ENCODE measurements at regions of chr2 and their contacts with region 1.

Region 1: GRCh38 chr2:166417669-166418068 is 41.9 kb upstream of the SCN9A start:
- DNase-seq: no peak
- H3K4me3 Mint-ChIP-seq: no peak overlapping the region
- H3K27ac Mint-ChIP-seq: no peak overlapping the region
- H3K4me1 Mint-ChIP-seq: no peaks in the 10 kb centered on the region
- H3K27me3 Mint-ChIP-seq: no peaks in the 10 kb centered on the region
- CTCF ChIP-seq: no peak

Region 2: GRCh38 chr2:165794536-165794928 is 623.1 kb before region 1 on chr2:
- CTCF ChIA-PET with region 1: no interaction called
- intact Hi-C with region 1: no loop called
- DNase-seq: peak; percentile 44
- H3K4me3 Mint-ChIP-seq: peak overlapping the region; percentile 83
- H3K27ac Mint-ChIP-seq: peak overlapping the region; percentile 92
- H3K4me1 Mint-ChIP-seq: peaks cover 26% of the 10 kb centered on the region
- H3K27me3 Mint-ChIP-seq: no peaks in the 10 kb centered on the region
- CTCF ChIP-seq: no peak

Region 3: GRCh38 chr2:165953655-165954606 is 463.7 kb before region 1 on chr2 and contains the start of gene TTC21B:
- CTCF ChIA-PET with region 1: no interaction called
- intact Hi-C with region 1: loop called (anchors 2 kb)
- DNase-seq: peak; percentile 97
- H3K4me3 Mint-ChIP-seq: no peak within 1 kb of the TSS
- H3K27ac Mint-ChIP-seq: no peak within 1 kb of the TSS
- H3K4me1 Mint-ChIP-seq: no peaks in the 10 kb centered on the region
- H3K27me3 Mint-ChIP-seq: no peaks in the 10 kb centered on the region
- CTCF ChIP-seq: peak; percentile 80
- total RNA-seq, gene TTC21B: 12.0 and 14.7 TPM in 2 replicates

Region 4: GRCh38 chr2:166239548-166239947 is 178.1 kb before region 1 on chr2:
- CTCF ChIA-PET with region 1: no interaction called
- intact Hi-C with region 1: no loop called
- DNase-seq: peak; percentile 61
- H3K4me3 Mint-ChIP-seq: no peak overlapping the region
- H3K27ac Mint-ChIP-seq: peak overlapping the region; percentile 73
- H3K4me1 Mint-ChIP-seq: peaks cover 53% of the 10 kb centered on the region
- H3K27me3 Mint-ChIP-seq: no peaks in the 10 kb centered on the region
- CTCF ChIP-seq: no peak

Region 5: GRCh38 chr2:166516712-166517303 is 99.1 kb after region 1 on chr2:
- CTCF ChIA-PET with region 1: interaction called, 7 read pairs
- intact Hi-C with region 1: loop called (anchors 5 kb)
- DNase-seq: peak; percentile 43
- H3K4me3 Mint-ChIP-seq: no peak overlapping the region
- H3K27ac Mint-ChIP-seq: no peak overlapping the region
- H3K4me1 Mint-ChIP-seq: no peaks in the 10 kb centered on the region
- H3K27me3 Mint-ChIP-seq: no peaks in the 10 kb centered on the region
- CTCF ChIP-seq: peak; percentile 25